Prostate gland (tissue), 2 donors: ENCODE measurements at regions of chr12 and their contacts with region 1.

Region 1: GRCh38 chr12:119176267-119176849 is 2.4 kb upstream of the HSPB8 start:
- DNase-seq: peak; percentile 83
- H3K4me3 ChIP-seq: peak overlapping the region in 1 of 2 donors; percentile 8
- H3K27ac ChIP-seq: peak overlapping the region; percentile 66 to 87
- H3K4me1 ChIP-seq: peaks cover 2% of the 10 kb centered on the region
- H3K27me3 ChIP-seq: no peaks in the 10 kb centered on the region
- CTCF ChIP-seq: no peak
- POLR2A ChIP-seq: peak; percentile 40

Region 2: GRCh38 chr12:119328111-119328510 is 151.8 kb after region 1 on chr12:
- intact Hi-C with region 1: loop called (anchors 5 kb)
- DNase-seq: no peak
- H3K4me3 ChIP-seq: no peak overlapping the region
- H3K27ac ChIP-seq: no peak overlapping the region
- H3K4me1 ChIP-seq: no peaks in the 10 kb centered on the region
- H3K27me3 ChIP-seq: no peaks in the 10 kb centered on the region
- CTCF ChIP-seq: peak in 2 of 4 experiments; percentile 9 to 21
- POLR2A ChIP-seq: no peak

Region 3: GRCh38 chr12:119340578-119340977 is 164.2 kb after region 1 on chr12:
- intact Hi-C with region 1: no loop called
- DNase-seq: no peak
- H3K4me3 ChIP-seq: no peak overlapping the region
- H3K27ac ChIP-seq: no peak overlapping the region
- H3K4me1 ChIP-seq: no peaks in the 10 kb centered on the region
- H3K27me3 ChIP-seq: no peaks in the 10 kb centered on the region
- CTCF ChIP-seq: no peak
- POLR2A ChIP-seq: no peak